Sigmoid colon (tissue), 7 donors: ENCODE measurements at regions of chr3 and their contacts with region 1.

Region 1: DNA sequence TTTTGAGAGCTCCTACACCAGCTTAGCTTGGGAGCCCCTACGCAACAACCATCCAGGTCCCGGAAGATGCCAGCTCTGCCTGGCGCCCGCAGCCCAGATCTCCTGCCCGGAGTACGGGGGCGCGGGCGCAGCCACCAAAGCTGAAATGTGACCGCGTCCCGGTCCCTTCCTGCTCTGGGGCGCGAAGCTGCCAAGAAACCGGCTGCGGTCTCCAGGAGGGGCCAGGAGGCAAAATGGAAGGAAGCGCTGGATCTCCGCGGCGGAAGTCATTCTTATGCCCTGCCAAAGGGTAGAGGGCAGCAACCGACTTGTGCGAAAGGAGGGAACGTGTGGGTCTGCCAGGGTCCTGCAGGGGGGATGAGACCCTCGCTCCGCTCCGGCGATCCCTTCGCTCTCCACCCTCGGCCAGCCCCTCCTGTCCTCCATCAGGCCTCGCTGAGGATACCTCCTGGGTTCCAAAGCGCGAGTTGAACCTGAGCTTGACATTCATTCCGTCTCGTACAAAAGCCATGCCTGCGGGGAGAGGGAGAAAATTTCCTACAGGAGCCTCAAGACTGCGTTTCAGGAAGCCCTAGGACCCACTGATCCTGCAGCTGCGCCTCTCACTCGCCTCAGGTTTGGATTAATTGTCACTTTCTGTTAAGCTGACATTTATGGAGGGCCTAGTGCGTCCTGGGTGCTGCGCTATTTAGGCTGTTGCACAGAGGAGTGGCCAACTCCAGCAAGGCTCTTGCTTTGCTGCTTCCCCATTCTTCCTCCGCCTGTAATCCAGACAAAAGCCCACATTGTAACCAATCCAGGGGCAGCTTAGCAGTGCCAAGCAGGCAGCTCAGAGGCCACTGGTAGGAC is 98.3 kb upstream of the VGLL3 start:
- DNase-seq: peak; percentile 89
- H3K4me3 ChIP-seq: peak overlapping the region; percentile 57 to 73 (median 68)
- H3K27ac ChIP-seq: peak overlapping the region; percentile 74 to 88 (median 82)
- H3K4me1 ChIP-seq: peaks cover 0 to 14% (median 3%) of the 10 kb centered on the region in 4 donors
- H3K27me3 ChIP-seq: no peaks in the 10 kb centered on the region
- CTCF ChIP-seq: no peak
- EP300 ChIP-seq: no peak
- POLR2A ChIP-seq: peak; percentile 39 to 44

Region 2: GRCh38 chr3:86785386-86785785 is 303.8 kb before region 1 on chr3:
- intact Hi-C with region 1: loop called (anchors 5 kb)
- DNase-seq: no peak
- H3K4me3 ChIP-seq: no peak overlapping the region
- H3K27ac ChIP-seq: no peak overlapping the region
- H3K4me1 ChIP-seq: no peaks in the 10 kb centered on the region
- H3K27me3 ChIP-seq: no peaks in the 10 kb centered on the region
- CTCF ChIP-seq: peak in 1 of 4 experiments; percentile 17
- EP300 ChIP-seq: no peak
- POLR2A ChIP-seq: no peak

Region 3: GRCh38 chr3:86969500-86970189 is 119.6 kb before region 1 on chr3:
- intact Hi-C with region 1: loop called (anchors 5 kb)
- DNase-seq: no peak
- H3K4me3 ChIP-seq: no peak overlapping the region
- H3K27ac ChIP-seq: no peak overlapping the region
- H3K4me1 ChIP-seq: no peaks in the 10 kb centered on the region
- H3K27me3 ChIP-seq: no peaks in the 10 kb centered on the region
- CTCF ChIP-seq: peak in 3 of 4 experiments; percentile 28 to 59 (median 35)
- EP300 ChIP-seq: no peak
- POLR2A ChIP-seq: no peak

Region 4: GRCh38 chr3:86990734-86991481 is 98.3 kb before region 1 on chr3 and contains the start of gene VGLL3:
- intact Hi-C with region 1: loop called (anchors 2 kb)
- DNase-seq: peak; percentile 93
- H3K4me3 ChIP-seq: peak within 1 kb of the TSS; percentile 76 to 84 (median 80)
- H3K27ac ChIP-seq: peak within 1 kb of the TSS; percentile 85 to 98 (median 92)
- H3K4me1 ChIP-seq: peaks cover 0 to 39% (median 22%) of the 10 kb centered on the region in 4 donors
- H3K27me3 ChIP-seq: no peaks in the 10 kb centered on the region
- CTCF ChIP-seq: peak in 1 of 4 experiments; percentile 23
- EP300 ChIP-seq: no peak
- POLR2A ChIP-seq: peak; percentile 23 to 49
- total RNA-seq, gene VGLL3: 24.0 to 35.0 (median 31.6) TPM

Region 5: DNA sequence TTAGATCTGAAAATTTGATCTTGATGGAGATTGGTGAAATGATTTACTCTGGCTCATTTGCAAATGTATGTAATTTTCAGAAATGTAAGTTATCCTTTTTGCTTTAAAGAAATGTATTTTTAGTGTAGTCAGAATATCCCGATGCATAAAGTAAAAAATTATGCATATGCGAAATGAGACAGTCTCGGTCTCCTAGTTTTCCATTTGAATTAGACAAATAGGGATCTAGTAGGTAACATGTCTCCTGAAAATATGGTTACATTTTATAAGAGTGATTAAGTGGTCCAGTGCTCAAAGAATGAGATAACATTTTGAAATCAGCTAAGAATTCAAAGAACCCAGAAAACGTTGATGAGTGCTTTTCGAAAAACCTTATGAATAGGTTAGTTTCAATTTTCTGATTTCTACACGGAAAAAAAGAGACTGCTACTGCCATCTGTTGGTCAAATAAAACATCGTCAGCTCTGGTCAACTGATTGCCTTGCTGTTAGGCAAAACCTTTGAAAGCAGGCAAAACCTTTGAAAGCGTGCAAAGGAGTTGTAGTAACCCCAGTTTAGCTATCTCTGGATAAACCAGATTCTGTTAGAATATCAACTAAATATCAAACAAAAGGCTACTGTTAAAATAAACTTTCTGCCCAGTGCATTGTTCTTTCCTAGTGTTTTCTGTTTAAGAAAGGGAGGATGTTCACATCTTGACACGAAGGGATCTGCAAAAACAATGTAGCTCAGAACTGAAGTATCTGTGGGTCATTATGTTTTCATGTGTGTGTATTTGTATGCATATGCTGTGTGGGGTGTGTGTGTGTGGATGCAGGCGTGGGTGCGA is 78.6 kb after region 1 on chr3:
- intact Hi-C with region 1: loop called (anchors 5 kb)
- DNase-seq: no peak
- H3K4me3 ChIP-seq: peak overlapping the region in 3 of 4 donors; percentile 10 to 43 (median 36)
- H3K27ac ChIP-seq: no peak overlapping the region
- H3K4me1 ChIP-seq: peaks cover 0 to 3% (median 0%) of the 10 kb centered on the region in 4 donors
- H3K27me3 ChIP-seq: no peaks in the 10 kb centered on the region
- CTCF ChIP-seq: peak in 3 of 4 experiments; percentile 37 to 70 (median 40)
- EP300 ChIP-seq: no peak
- POLR2A ChIP-seq: no peak